ENCODE measurements at regions of chr16 and their contacts with region 1.

Region 1: GRCh38 chr16:27313422-27314160 is at the start of gene IL4R:
- DNase-seq: peak; percentile 88
- H3K4me3 ChIP-seq: peak within 1 kb of the TSS; percentile 74 to 95 (median 88)
- H3K27ac ChIP-seq: peak within 1 kb of the TSS; percentile 96 to 99 (median 99)
- H3K4me1 ChIP-seq: peaks cover 0 to 49% (median 46%) of the 10 kb centered on the region in 4 donors
- H3K27me3 ChIP-seq: no peaks in the 10 kb centered on the region
- CTCF ChIP-seq: no peak
- EP300 ChIP-seq: no peak
- POLR2A ChIP-seq: peak; percentile 14 to 50
- total RNA-seq, gene IL4R: 54.6 to 177 (median 102) TPM

Region 2: DNA sequence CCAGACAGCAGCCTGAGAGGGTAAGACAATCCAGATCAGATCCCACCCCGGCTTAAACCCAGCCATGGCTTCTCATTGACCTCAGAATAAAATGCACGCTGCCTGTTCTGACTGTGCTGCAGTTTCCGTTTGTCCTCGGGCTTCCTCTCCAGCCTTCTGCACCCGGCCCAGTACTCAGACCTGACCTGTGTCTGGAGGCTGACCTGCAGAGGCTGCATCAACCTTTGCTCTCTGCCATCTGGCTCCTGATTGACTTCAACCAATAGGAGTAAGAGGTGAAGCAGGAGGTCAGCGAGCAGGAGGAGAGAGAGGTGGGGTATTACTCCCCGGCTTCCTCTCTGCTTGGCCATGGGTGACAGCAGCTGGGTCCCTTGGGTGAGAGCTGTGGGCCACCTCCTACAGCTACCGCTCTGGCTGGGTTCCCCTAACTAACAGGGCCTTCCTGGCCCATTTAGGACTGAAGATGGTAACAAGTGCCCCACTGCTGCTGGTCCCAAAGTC is 200.2 kb before region 1 on chr16:
- intact Hi-C with region 1: no loop called
- DNase-seq: no peak
- H3K4me3 ChIP-seq: no peak overlapping the region
- H3K27ac ChIP-seq: no peak overlapping the region
- H3K4me1 ChIP-seq: peaks cover 0 to 10% (median 9%) of the 10 kb centered on the region in 4 donors
- H3K27me3 ChIP-seq: no peaks in the 10 kb centered on the region
- CTCF ChIP-seq: no peak
- EP300 ChIP-seq: no peak
- POLR2A ChIP-seq: no peak

Region 3: DNA sequence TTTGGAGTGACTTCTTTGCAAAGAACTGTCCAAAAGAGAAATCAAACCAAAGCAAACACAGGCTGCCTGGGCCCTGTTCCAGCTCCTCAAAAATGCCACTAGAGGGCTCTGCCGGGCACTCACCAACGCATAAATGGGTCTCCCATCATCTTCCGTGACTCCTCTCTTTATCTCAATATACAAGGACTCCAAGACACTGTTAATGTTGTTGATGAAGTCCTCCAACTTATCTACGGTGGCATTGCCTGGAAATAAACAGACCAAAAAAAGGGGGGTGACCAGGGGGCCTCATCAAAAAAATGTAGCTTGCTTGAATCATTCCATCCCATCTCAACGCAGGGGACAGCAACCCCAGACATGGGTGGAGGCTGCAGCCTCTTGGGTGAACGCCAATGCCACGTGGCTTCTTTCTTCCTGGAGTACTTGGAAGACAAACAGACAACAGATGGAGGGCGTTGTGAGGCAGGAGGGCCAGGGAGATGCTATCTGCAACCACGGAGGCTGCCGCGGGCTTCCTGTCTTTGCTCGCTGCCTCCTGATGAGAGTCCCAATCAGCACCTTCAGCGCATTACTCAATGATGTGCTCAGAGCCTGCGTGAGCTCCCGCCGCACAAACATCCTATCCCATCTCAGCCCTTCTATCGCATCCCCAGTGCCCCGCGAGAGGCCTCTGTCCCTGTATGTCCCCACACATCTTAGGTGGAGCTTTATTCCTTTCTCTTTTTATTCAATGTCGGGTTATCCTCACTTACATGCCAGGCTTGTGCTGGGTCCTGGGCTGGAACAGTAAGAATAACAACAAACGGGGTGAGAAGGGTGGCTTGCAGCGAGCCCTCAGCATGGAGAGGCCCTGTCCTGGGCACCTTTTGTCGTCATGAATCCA is 78.3 kb before region 1 on chr16:
- intact Hi-C with region 1: loop called (anchors 2 kb)
- DNase-seq: peak; percentile 95
- H3K4me3 ChIP-seq: peak overlapping the region in 3 of 4 donors; percentile 18 to 23 (median 23)
- H3K27ac ChIP-seq: peak overlapping the region; percentile 68 to 78 (median 72)
- H3K4me1 ChIP-seq: peaks cover 0 to 27% (median 22%) of the 10 kb centered on the region in 4 donors
- H3K27me3 ChIP-seq: no peaks in the 10 kb centered on the region
- CTCF ChIP-seq: peak; percentile 60 to 80 (median 70)
- EP300 ChIP-seq: no peak
- POLR2A ChIP-seq: no peak

Region 4: GRCh38 chr16:27242868-27243590 is 70.6 kb before region 1 on chr16:
- intact Hi-C with region 1: loop called (anchors 2 kb)
- DNase-seq: peak; percentile 73
- H3K4me3 ChIP-seq: peak overlapping the region; percentile 6 to 39 (median 26)
- H3K27ac ChIP-seq: peak overlapping the region; percentile 75 to 86 (median 84)
- H3K4me1 ChIP-seq: peaks cover 0 to 75% (median 62%) of the 10 kb centered on the region in 4 donors
- H3K27me3 ChIP-seq: no peaks in the 10 kb centered on the region
- CTCF ChIP-seq: peak in 1 of 4 experiments; percentile 16
- EP300 ChIP-seq: peak in 1 of 4 donors; percentile 19
- POLR2A ChIP-seq: peak in 1 of 2 donors; percentile 20

Region 5: DNA sequence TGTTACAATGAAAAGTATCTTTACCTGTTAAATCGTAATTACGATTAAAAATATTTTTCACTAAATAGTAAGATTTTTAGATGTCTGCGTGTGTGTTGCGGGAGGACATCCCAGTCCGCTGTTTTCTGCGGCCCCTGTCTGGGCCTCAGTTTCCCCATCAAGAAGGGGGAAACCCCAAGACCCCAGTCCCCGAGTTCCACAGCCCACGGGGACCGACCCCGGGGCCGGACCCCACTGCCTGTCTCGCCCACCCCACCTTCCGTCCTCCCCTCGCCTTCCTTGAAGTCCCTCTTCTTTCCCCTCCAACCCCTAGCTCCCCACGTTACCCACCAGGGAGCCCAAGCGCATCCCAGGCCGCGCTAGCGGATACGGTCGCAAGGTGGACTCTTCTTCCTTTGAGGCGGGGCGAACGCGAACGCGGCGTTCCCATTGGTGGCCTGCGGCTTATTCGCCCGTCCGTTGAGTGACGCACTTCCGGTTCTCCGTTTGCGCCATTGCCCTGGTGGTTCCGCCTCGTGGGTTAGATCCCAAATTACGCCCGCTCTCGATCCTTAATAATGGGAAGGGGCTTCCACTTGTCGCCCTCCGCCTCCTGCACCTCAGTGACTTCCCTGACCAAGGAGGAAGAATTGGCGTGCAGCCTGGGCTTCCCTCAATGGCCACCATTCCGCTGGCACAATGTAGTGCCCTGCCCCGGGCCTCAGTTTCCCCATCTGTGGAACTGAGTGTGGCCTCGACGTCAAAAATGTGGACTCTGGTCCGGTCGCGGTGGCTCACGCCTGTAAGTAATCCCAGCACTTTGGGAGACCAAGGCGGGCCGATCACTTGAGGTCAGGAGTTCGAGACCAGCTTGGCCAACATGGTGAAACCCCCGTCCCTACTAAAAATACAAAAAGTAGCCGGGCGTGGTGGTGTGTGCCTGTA is 45.0 kb before region 1 on chr16 and contains the start of gene NSMCE1:
- intact Hi-C with region 1: loop called (anchors 2 kb)
- DNase-seq: peak; percentile 99
- H3K4me3 ChIP-seq: peak within 1 kb of the TSS; percentile 50 to 89 (median 82)
- H3K27ac ChIP-seq: peak within 1 kb of the TSS; percentile 77 to 90 (median 88)
- H3K4me1 ChIP-seq: peaks cover 0 to 17% (median 13%) of the 10 kb centered on the region in 4 donors
- H3K27me3 ChIP-seq: no peaks in the 10 kb centered on the region
- CTCF ChIP-seq: peak in 2 of 4 experiments; percentile 28 to 46
- EP300 ChIP-seq: no peak
- POLR2A ChIP-seq: peak; percentile 74 to 84
- total RNA-seq, gene NSMCE1: 32.5 to 51.0 (median 45.1) TPM

Region 6: DNA sequence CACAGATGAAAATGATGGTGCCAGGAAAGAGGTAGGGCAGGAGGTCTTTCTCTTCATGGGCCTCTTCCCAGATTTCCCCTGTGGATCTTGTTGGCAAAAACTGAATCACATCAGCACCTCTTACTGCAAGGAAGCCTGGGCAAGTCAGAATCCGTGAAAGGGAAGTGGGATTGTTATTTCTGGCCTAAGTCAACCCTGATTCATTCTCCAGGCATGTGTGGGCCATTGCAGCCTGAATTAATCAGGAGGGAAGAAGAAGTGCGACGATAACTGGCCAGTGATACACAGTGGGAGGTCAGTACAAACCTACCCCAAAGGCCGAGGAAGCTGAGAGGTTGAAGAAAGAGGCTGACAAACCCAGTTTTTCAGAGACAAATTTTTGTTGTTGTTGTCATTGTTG is 27.1 kb before region 1 on chr16:
- intact Hi-C with region 1: no loop called
- DNase-seq: no peak
- H3K4me3 ChIP-seq: no peak overlapping the region
- H3K27ac ChIP-seq: peak overlapping the region in 1 of 4 donors; percentile 48
- H3K4me1 ChIP-seq: no peaks in the 10 kb centered on the region
- H3K27me3 ChIP-seq: no peaks in the 10 kb centered on the region
- CTCF ChIP-seq: no peak
- EP300 ChIP-seq: no peak
- POLR2A ChIP-seq: no peak

Region 7: GRCh38 chr16:27330542-27330941 is 17.0 kb after region 1 on chr16:
- intact Hi-C with region 1: loop called (anchors 2 kb)
- DNase-seq: peak; percentile 97
- H3K4me3 ChIP-seq: no peak overlapping the region
- H3K27ac ChIP-seq: peak overlapping the region; percentile 96 to 99 (median 99)
- H3K4me1 ChIP-seq: peaks cover 0 to 97% (median 81%) of the 10 kb centered on the region in 4 donors
- H3K27me3 ChIP-seq: no peaks in the 10 kb centered on the region
- CTCF ChIP-seq: no peak
- EP300 ChIP-seq: peak; percentile 89 to 99 (median 95)
- POLR2A ChIP-seq: no peak

Region 8: GRCh38 chr16:27367461-27368357 is 54.1 kb after region 1 on chr16:
- intact Hi-C with region 1: loop called (anchors 2 kb)
- DNase-seq: peak; percentile 92
- H3K4me3 ChIP-seq: peak overlapping the region in 2 of 4 donors; percentile 18 to 33
- H3K27ac ChIP-seq: peak overlapping the region; percentile 20 to 68 (median 38)
- H3K4me1 ChIP-seq: peaks cover 0 to 27% (median 19%) of the 10 kb centered on the region in 4 donors
- H3K27me3 ChIP-seq: no peaks in the 10 kb centered on the region
- CTCF ChIP-seq: peak; percentile 47 to 87 (median 73)
- EP300 ChIP-seq: no peak
- POLR2A ChIP-seq: no peak

Measured in sigmoid colon (tissue), 7 donors.